ENCODE measurements at regions of chr2 and their contacts with region 1.

Region 1: GRCh38 chr2:134341476-134341875 is 87.6 kb downstream of the MGAT5 start:
- DNase-seq: no peak

Region 2: GRCh38 chr2:134323777-134324176 is 17.7 kb before region 1 on chr2:
- intact Hi-C with region 1: loop called in 1 of 2 experiments (anchors 2 kb)
- DNase-seq: no peak

Region 3: DNA sequence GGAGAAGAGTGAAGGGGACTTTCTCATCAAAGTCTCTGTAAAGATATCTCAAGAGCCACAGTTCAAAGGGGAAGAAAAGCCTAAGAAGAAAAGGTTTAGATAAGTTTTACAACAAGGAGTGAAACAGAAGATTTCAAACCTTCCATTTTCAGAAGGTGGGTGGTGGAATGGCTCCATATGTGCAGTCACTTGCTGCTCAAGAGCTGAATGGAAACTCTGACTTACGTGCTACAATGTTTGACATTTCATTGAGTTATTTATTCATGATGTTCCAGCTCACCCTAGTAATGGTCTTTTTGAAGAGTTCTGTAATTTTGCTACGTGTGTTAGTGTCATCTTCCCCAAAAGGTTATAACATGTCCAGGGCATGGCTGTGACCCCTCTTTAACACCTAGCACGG is 1473.8 kb after region 1 on chr2:
- intact Hi-C with region 1: no loop called
- DNase-seq: no peak

Measured in posterior vena cava (tissue), 2 donors.